ENCODE measurements at regions of chr2 and their contacts with region 1.

Region 1: GRCh38 chr2:241877989-241878970 is 8.8 kb downstream of the RTP5 start:
- DNase-seq: peak; percentile 88
- ATAC-seq: peak; percentile 21
- H3K4me3 Mint-ChIP-seq: no peak overlapping the region
- H3K27ac Mint-ChIP-seq: no peak overlapping the region
- H3K4me1 Mint-ChIP-seq: peaks cover 26% of the 10 kb centered on the region
- H3K27me3 Mint-ChIP-seq: no peaks in the 10 kb centered on the region

Region 2: GRCh38 chr2:240832205-240832727 is 1046.0 kb before region 1 on chr2:
- CTCF ChIA-PET with region 1: no interaction called
- POLR2A ChIA-PET with region 1: no interaction called
- intact Hi-C with region 1: loop called in 1 of 2 experiments (anchors 1 kb)
- DNase-seq: peak; percentile 98
- ATAC-seq: peak; percentile 96
- H3K4me3 Mint-ChIP-seq: peak overlapping the region; percentile 63
- H3K27ac Mint-ChIP-seq: no peak overlapping the region
- H3K4me1 Mint-ChIP-seq: peaks cover 2% of the 10 kb centered on the region
- H3K27me3 Mint-ChIP-seq: peaks cover 19% of the 10 kb centered on the region

Region 3: DNA sequence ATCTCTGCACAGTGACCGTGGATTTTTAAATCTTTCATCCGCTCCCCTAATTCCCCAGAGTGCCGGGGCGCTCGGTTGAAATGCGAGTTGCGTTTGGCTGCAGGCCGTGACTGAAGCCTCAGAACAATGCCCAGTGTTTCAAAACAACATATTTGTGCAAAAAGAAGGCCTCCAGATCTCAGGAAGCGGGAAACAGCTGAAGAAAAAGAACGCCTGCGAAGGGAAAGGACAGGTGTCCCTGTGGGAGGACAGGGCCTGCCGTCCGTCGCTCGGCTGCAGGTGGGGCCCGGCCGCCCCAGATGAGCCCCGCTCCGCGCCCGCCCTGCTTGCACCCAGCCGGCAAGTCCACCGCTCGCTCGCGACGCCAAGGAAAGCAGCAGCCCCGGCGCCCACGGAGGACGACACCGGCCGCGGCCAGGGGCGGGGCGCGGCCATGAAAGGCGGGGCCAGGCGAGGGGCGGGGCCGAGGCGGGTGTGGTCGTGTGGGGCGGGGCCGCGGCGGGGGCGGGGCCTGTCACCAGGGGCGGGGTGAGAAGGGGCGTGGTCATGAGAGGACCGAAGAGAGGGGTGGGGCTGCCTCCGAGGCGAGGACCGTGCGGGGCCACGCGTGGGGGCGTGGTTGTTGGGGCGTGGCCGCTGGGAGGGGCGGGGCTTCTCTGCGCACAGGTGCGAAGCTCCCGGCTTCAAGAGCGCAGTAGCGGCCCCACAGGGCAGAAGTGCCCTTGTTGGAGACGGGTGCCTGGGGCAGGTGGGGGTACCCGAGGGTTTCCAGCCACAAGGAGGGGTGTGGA is 337.3 kb before region 1 on chr2:
- CTCF ChIA-PET with region 1: no interaction called
- POLR2A ChIA-PET with region 1: no interaction called
- intact Hi-C with region 1: loop called in 1 of 2 experiments (anchors 1 kb)
- DNase-seq: peak; percentile 90
- ATAC-seq: peak; percentile 92
- H3K4me3 Mint-ChIP-seq: peak overlapping the region; percentile 31
- H3K27ac Mint-ChIP-seq: no peak overlapping the region
- H3K4me1 Mint-ChIP-seq: peaks cover 4% of the 10 kb centered on the region
- H3K27me3 Mint-ChIP-seq: peaks cover 14% of the 10 kb centered on the region

Region 4: DNA sequence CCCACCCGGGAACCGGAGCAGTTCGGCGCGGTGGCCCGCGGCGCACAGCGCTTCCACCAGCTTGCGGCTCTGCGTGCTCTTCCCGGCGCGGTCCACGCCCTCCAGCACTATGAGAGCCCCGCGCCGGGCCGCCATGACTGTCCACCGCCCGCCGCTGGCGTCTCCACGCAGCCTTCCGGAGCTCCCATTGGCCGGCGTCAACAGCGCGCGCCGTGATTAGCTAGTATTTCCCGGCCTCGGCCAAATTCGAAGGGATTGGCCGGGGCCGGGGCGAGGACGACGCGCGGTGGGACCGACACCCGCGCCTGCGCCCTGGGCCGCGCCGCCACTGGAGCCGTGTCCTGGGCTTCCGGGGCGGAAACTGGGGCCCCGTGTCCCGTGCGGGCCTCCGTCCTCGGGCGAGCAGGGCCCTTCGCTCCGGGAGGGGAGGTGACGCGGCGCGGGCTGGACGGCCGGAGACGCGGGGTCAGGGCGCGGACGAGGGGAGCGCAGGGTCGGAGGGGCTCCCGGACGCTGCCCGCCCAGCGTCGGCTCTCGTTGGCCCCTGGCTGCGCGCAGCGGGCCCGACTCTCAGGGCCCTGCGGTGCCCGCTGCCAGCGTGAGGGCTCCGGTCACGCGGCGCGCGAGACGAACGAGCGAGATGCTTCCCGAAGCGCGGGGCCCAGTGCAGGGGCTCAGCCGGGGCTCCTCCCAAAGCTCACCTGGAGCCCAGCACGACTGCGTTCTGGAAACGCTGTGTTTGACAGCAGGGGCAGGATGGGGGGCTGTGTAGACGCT is 191.4 kb before region 1 on chr2 and contains the start of gene DTYMK:
- CTCF ChIA-PET with region 1: interaction called, 4 read pairs
- POLR2A ChIA-PET with region 1: interaction called, 3 read pairs
- intact Hi-C with region 1: loop called (anchors 1 kb)
- DNase-seq: peak; percentile 98
- ATAC-seq: peak; percentile 96
- H3K4me3 Mint-ChIP-seq: peak within 1 kb of the TSS; percentile 98
- H3K27ac Mint-ChIP-seq: peak within 1 kb of the TSS; percentile 96
- H3K4me1 Mint-ChIP-seq: peaks cover 32% of the 10 kb centered on the region
- H3K27me3 Mint-ChIP-seq: no peaks in the 10 kb centered on the region
- total RNA-seq, gene DTYMK: 79.8 to 93.1 TPM

Region 5: GRCh38 chr2:241859436-241860183 is 18.7 kb before region 1 on chr2:
- CTCF ChIA-PET with region 1: interaction called, 5 read pairs
- POLR2A ChIA-PET with region 1: interaction called, 13 read pairs
- intact Hi-C with region 1: loop called in 1 of 2 experiments (anchors 1 kb)
- DNase-seq: peak; percentile 88
- ATAC-seq: peak; percentile 47
- H3K4me3 Mint-ChIP-seq: peak overlapping the region; percentile 85
- H3K27ac Mint-ChIP-seq: peak overlapping the region; percentile 95
- H3K4me1 Mint-ChIP-seq: peaks cover 63% of the 10 kb centered on the region
- H3K27me3 Mint-ChIP-seq: peaks cover 11% of the 10 kb centered on the region